Activated naive CD4-positive, alpha-beta T cell treated with anti-CD3 and anti-CD28 coated beads for 36 hours (primary cell): ENCODE measurements at regions of chr14 and their contacts with region 1.

Region 1: DNA sequence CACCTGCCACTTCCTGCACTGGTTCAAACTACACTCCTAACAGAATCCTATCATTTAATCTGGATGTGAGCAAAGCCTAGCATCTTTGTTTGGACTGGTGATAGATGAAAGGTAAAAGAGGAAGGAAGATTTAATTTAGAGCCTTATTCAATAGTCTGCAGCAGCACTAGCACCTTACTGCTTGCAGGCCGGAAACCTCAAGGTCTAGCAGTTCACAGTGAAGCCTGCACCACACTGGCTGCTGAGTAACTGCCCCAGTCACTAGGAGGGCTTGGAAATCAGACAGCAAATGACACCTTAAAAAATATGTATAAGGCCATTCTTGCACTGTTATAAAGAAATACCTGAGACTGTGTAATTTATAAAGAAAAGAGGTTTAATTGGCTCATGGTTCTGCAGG is 358.0 kb downstream of the DAD1 start:
- DNase-seq: peak; percentile 21
- H3K4me3 Mint-ChIP-seq: no peak overlapping the region
- H3K27ac Mint-ChIP-seq: peak overlapping the region; percentile 70
- H3K4me1 Mint-ChIP-seq: peaks cover 2% of the 10 kb centered on the region
- H3K27me3 Mint-ChIP-seq: no peaks in the 10 kb centered on the region

Region 2: GRCh38 chr14:22177870-22178269 is 53.1 kb before region 1 on chr14:
- CTCF ChIA-PET with region 1: no interaction called
- intact Hi-C with region 1: no loop called
- DNase-seq: no peak
- H3K4me3 Mint-ChIP-seq: no peak overlapping the region
- H3K27ac Mint-ChIP-seq: no peak overlapping the region
- H3K4me1 Mint-ChIP-seq: peaks cover 10% of the 10 kb centered on the region
- H3K27me3 Mint-ChIP-seq: no peaks in the 10 kb centered on the region

Region 3: GRCh38 chr14:22271838-22272799 is 41.1 kb after region 1 on chr14:
- CTCF ChIA-PET with region 1: no interaction called
- intact Hi-C with region 1: loop called (anchors 2 kb)
- DNase-seq: no peak
- H3K4me3 Mint-ChIP-seq: no peak overlapping the region
- H3K27ac Mint-ChIP-seq: peak overlapping the region; percentile 41
- H3K4me1 Mint-ChIP-seq: peaks cover 2% of the 10 kb centered on the region
- H3K27me3 Mint-ChIP-seq: no peaks in the 10 kb centered on the region

Region 4: GRCh38 chr14:23446291-23446851 is 1215.4 kb after region 1 on chr14:
- CTCF ChIA-PET with region 1: no interaction called
- intact Hi-C with region 1: no loop called
- DNase-seq: no peak
- H3K4me3 Mint-ChIP-seq: no peak overlapping the region
- H3K27ac Mint-ChIP-seq: no peak overlapping the region
- H3K4me1 Mint-ChIP-seq: no peaks in the 10 kb centered on the region
- H3K27me3 Mint-ChIP-seq: peaks cover 2% of the 10 kb centered on the region